ENCODE measurements at regions of chr6 and their contacts with region 1.

Region 1: DNA sequence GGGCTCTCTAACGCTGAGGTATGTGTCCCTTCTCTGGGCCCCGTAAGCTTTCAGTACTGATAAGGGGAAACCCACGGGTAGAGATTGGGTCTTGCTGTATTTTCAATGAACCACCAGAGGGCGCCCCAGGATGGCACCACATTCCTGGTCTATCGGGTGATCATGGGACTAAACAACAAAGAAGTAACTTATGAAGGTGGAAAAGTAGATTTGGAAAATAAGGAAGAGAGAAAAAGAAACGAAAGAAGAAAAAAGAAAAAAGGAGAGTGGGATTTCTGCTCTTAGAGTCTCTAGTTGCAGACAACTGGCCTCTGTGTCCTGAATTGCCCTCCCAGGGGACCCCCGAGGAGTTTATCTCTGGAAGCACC is 93.8 kb downstream of the GMPR start:
- DNase-seq: peak; percentile 63 to 77
- ATAC-seq: peak; percentile 91

Region 2: DNA sequence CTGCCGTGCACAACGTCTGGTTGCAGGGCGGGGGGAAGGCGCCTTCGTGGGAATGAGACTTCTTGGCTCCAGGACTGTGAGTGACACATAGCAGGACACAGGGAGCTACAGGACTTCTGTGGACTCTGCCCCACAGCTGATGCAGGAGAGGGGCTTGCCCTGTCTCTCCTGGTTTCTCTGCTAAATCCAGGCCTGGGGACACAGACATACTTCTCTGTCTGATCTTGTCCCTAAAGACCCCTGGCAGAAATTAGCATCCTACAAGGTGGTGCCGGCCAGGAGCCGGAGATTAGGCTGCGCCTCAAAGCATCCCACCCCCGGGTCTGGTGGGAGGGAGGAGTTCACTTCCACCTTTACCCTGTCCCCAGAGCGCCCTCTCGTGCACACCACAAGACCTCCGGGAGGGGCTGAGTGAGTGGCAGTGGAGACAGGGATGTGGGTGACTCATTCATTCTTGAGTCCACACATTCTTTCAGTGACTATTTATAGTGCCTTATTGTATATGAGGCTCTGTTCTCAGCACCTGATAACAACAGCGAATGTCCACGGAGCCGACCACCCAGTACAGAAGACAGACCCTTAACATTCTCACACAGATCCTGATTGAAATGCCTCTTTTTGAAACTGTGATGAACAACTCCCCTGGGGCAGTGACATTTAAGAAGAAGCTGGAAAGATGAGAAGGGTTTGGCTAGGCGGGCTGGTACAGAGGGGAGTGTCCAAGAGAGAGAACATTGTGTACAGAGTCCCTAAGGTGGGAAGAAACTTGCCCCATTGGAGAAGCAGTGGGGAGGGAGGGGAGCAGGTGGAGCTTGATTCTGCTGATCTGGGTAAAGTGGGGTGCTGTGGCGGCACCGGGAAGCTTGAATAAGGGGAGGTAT is 54.8 kb before region 1 on chr6:
- intact Hi-C with region 1: no loop called
- DNase-seq: peak; percentile 51 to 72
- ATAC-seq: peak; percentile 93

Region 3: GRCh38 chr6:16409531-16410441 is 77.6 kb after region 1 on chr6:
- intact Hi-C with region 1: loop called (anchors 5 to 10 kb)
- DNase-seq: peak; percentile 57 to 73
- ATAC-seq: peak; percentile 70

Region 4: GRCh38 chr6:16770701-16771569 is 438.8 kb after region 1 on chr6:
- intact Hi-C with region 1: loop called in 1 of 2 experiments (anchors 5 kb)
- DNase-seq: peak; percentile 80 to 83
- ATAC-seq: peak; percentile 94

Region 5: GRCh38 chr6:16964553-16965501 is 632.7 kb after region 1 on chr6:
- intact Hi-C with region 1: loop called in 1 of 2 experiments (anchors 10 kb)
- DNase-seq: peak; percentile 49 to 75
- ATAC-seq: peak; percentile 89